Common myeloid progenitor, CD34-positive (primary cell): ENCODE measurements at regions of chr17 and their contacts with region 1.

Region 1: GRCh38 chr17:42322382-42323267 is 34.3 kb downstream of the STAT5A start:
- DNase-seq: peak; percentile 96 to 98 (median 97)
- H3K4me3 ChIP-seq: peak overlapping the region in 2 of 7 experiments; percentile 19 to 38
- H3K27ac ChIP-seq: peak overlapping the region; percentile 98 to 99
- H3K4me1 ChIP-seq: peaks cover 24 to 56% (median 55%) of the 10 kb centered on the region in 4 experiments
- H3K27me3 ChIP-seq: no peaks in the 10 kb centered on the region

Region 2: GRCh38 chr17:42312285-42313130 is 10.1 kb before region 1 on chr17:
- CTCF ChIA-PET with region 1: interaction called, 94 read pairs
- POLR2A ChIA-PET with region 1: interaction called, 36 read pairs
- DNase-seq: peak; percentile 90 to 95 (median 93)
- H3K4me3 ChIP-seq: peak overlapping the region in 3 of 7 experiments; percentile 43 to 51 (median 48)
- H3K27ac ChIP-seq: peak overlapping the region; percentile 62 to 99
- H3K4me1 ChIP-seq: peaks cover 24 to 82% (median 74%) of the 10 kb centered on the region in 4 experiments
- H3K27me3 ChIP-seq: no peaks in the 10 kb centered on the region

Region 3: DNA sequence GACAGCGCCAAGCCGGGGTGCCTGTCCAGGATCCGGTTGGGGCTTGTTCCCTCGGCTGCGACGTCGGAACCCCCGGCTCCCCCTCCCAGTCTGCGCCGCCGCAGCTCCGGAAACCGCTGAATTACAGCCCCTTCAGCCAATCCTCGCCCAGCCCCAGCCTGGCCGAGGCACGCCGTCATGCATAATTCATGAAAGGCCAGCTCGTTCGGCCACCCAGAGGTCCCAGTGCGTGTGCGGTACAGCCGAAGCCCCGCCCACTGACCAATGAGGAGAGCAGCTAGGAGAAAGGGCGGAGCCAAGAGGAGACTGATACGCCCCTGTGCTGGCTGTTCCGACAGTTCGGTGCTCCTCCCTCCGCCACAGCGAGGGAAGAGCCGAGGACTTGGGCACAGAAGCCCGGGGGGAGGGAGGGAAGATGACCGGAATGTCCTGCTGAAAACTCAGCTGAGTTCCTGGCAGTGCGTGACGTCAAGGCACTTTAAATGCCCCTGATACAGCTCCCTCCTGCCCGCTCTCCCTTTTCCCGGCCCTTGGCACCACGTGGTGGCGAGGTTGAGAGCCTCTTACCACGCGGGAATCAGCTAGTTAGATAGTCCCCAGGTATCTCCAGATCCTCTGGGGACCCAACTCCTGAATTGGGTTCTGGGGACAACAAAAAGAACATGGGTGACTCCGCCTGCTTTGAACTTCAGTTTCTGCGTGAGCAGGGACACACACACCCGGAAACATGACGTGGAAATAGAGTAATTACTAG is 65.9 kb after region 1 on chr17 and contains the start of gene STAT3:
- CTCF ChIA-PET with region 1: interaction called, 9 read pairs
- POLR2A ChIA-PET with region 1: interaction called, 17 read pairs
- DNase-seq: peak; percentile 99 to 100 (median 100)
- H3K4me3 ChIP-seq: peak within 1 kb of the TSS; percentile 77 to 98 (median 93)
- H3K27ac ChIP-seq: peak within 1 kb of the TSS; percentile 98
- H3K4me1 ChIP-seq: peaks cover 19 to 38% (median 31%) of the 10 kb centered on the region in 4 experiments
- H3K27me3 ChIP-seq: no peaks in the 10 kb centered on the region

Region 4: DNA sequence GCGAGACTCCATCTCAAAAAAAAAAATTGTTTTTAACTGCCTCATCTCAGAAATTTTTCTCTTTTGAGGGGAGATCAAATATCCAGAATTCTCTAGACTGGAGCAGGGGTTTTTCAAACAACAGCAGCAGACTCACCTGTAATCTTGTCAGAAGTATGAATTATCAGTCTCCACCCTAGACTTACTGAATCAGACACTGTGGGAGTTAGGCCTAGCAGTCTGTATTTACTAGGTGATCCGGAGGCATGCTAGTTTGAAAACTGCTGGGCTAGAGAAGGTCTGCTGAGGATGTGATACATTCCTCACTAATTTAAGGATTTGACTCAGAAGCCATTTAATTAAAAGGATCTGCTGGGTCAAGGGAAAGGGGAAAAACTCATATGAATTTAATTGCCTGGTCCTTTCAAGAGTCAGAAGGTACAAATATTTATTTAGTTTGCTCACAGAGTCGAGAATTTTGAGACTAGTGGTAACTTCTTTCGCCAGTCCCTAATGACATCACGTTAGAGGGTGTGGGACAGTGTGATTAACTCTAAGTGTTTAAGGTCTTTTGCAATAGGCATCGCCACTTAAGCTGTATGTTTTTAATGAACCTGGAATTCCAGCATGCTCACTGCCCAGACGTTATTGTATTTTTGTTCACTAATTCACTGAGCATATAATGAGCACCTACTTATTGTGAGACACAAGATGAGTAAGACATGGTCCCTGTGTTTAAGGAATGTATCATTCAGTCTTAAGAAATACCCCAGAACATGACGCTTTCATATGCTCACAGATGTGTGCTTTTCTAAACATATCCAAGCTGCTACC is 150.3 kb after region 1 on chr17:
- CTCF ChIA-PET with region 1: no interaction called
- POLR2A ChIA-PET with region 1: no interaction called
- DNase-seq: no peak
- H3K4me3 ChIP-seq: no peak overlapping the region
- H3K27ac ChIP-seq: no peak overlapping the region
- H3K4me1 ChIP-seq: peaks cover 0 to 8% (median 2%) of the 10 kb centered on the region in 4 experiments
- H3K27me3 ChIP-seq: no peaks in the 10 kb centered on the region

Region 5: GRCh38 chr17:42527273-42527703 is 204.7 kb after region 1 on chr17:
- CTCF ChIA-PET with region 1: interaction called, 23 read pairs
- POLR2A ChIA-PET with region 1: interaction called, 4 read pairs
- DNase-seq: peak; percentile 82 to 90 (median 86)
- H3K4me3 ChIP-seq: no peak overlapping the region
- H3K27ac ChIP-seq: no peak overlapping the region
- H3K4me1 ChIP-seq: peaks cover 2 to 51% (median 41%) of the 10 kb centered on the region in 4 experiments
- H3K27me3 ChIP-seq: no peaks in the 10 kb centered on the region